HCT116 (cell line): ENCODE measurements at regions of chr1 and their contacts with region 1.

Region 1: GRCh38 chr1:222713091-222713961 is 962 bp downstream of the BROX start:
- DNase-seq: peak; percentile 90
- ATAC-seq: peak; percentile 75
- H3K4me3 ChIP-seq: peak overlapping the region; percentile 73 to 96
- H3K27ac ChIP-seq: peak overlapping the region; percentile 84
- H3K4me1 ChIP-seq: peaks cover 0 to 12% of the 10 kb centered on the region in 2 experiments; a peak in 2 of 4 replicates
- H3K27me3 ChIP-seq: no peaks in the 10 kb centered on the region
- CTCF ChIP-seq: no peak
- POLR2A ChIP-seq: peak; percentile 82
- RAD21 ChIP-seq: no peak

Region 2: GRCh38 chr1:222643938-222644635 is 69.2 kb before region 1 on chr1:
- CTCF ChIA-PET with region 1: no interaction called
- POLR2A ChIA-PET with region 1: interaction called, 3 read pairs
- RAD21 ChIA-PET with region 1: no interaction called
- intact Hi-C with region 1: loop called (anchors 5 kb)
- DNase-seq: peak; percentile 98
- ATAC-seq: peak; percentile 93
- H3K4me3 ChIP-seq: peak overlapping the region; percentile 84 to 96
- H3K27ac ChIP-seq: peak overlapping the region; percentile 82
- H3K4me1 ChIP-seq: peaks cover 2 to 13% of the 10 kb centered on the region in 2 experiments; a peak in 2 of 4 replicates
- H3K27me3 ChIP-seq: no peaks in the 10 kb centered on the region
- CTCF ChIP-seq: no peak
- POLR2A ChIP-seq: no peak
- RAD21 ChIP-seq: no peak; the same call in 1 of the 2 replicates

Region 3: DNA sequence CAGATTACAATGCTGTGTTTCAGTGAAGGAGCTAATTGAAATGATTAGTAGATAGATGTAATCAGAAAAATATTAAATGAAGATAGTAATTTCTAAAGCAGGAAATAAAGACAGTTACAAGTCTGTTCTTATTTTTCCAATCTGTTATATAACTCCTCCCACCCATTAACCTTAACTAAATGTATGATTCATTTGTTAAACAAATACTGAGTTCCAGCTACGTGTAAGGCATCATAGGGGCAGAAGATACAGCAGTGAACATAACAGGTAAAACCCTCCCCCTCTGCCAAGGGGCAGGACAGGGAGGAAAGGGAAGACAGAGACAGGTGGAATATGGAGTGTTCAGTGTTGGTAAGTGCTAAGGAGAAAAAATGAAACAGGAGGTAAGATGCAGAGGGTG is 23.6 kb after region 1 on chr1 and contains the start of gene FAM177B:
- CTCF ChIA-PET with region 1: no interaction called
- POLR2A ChIA-PET with region 1: no interaction called
- RAD21 ChIA-PET with region 1: no interaction called
- intact Hi-C with region 1: no loop called
- DNase-seq: no peak
- ATAC-seq: no peak
- H3K4me3 ChIP-seq: no peak within 1 kb of the TSS
- H3K27ac ChIP-seq: no peak within 1 kb of the TSS
- H3K4me1 ChIP-seq: no peaks in the 10 kb centered on the region
- H3K27me3 ChIP-seq: no peaks in the 10 kb centered on the region
- CTCF ChIP-seq: no peak
- POLR2A ChIP-seq: no peak
- RAD21 ChIP-seq: no peak
- total RNA-seq, gene FAM177B: not detected